Endothelial cell of umbilical vein (primary cell): ENCODE measurements at regions of chr2 and their contacts with region 1.

Region 1: DNA sequence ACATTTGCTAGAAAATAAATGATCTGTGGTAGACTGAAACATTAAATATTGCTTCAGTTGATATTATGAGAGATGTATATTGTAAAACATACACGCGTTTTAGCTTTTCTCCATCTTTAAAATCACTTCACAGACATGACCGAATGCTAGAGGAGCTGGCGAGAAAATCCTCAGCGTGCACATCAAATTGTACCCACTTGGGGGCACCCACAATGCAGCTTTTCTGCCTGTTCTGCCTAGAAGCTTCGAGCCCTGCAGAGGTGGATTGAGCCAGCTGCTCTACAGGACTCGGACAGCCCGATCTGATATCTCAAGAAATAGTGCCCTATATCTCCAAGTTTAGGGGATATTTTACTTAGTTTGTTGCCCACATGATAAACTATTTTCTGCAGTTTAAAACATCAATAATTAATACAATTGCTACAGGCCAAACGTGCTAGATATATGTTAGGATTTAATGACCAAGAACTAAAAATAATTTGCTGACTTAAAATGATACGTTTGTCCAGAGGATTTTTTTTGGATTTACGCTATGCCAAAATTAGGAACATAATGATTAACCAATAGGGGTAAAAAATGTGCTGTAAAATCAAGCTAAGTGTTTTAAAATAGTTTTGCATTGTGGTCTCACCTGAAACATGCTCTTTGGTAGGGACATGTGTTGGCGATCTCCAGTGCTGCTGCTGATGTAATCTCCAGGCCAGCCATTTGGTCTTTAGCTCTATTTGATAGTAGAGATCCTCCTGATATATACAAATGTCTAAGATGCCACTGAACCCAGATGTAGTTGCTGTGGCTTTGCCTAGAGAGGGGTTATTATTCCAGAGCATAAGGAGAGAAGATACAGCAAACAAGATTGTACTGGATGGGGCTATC is 22.3 kb upstream of the ATP5MC3 start:
- DNase-seq: peak; percentile 54
- H3K4me3 ChIP-seq: no peak overlapping the region
- H3K27ac ChIP-seq: no peak overlapping the region
- H3K4me1 ChIP-seq: no peaks in the 10 kb centered on the region
- H3K27me3 ChIP-seq: peaks cover 0 to 13% of the 10 kb centered on the region in 2 experiments
- CTCF ChIP-seq: peak; percentile 39 to 54
- POLR2A ChIP-seq: no peak

Region 2: DNA sequence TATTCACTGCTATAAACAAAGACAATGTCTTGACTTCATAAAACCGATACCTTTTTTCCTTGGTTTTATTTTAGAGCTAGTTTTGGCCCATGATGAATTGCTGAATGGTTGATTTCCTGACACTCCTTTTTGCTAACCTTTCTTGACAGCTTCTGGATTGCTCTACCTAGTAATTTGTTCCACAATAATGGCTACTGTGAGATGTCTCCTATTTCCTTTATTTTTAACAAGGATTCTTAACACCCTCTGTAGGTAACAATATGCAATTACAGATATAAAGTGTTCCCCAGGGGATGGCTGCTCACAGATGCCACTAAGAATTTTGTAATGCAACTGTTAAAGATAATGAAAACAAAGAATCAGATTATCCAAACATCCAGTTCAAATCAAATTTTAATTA is 78.4 kb after region 1 on chr2:
- CTCF ChIA-PET with region 1: interaction called, 6 read pairs
- POLR2A ChIA-PET with region 1: no interaction called
- dilution Hi-C with region 1: no loop called
- intact Hi-C with region 1: loop called (anchors 2 kb)
- DNase-seq: peak; percentile 44
- H3K4me3 ChIP-seq: no peak overlapping the region
- H3K27ac ChIP-seq: no peak overlapping the region
- H3K4me1 ChIP-seq: no peaks in the 10 kb centered on the region
- H3K27me3 ChIP-seq: peaks cover 17 to 18% of the 10 kb centered on the region in 2 experiments
- CTCF ChIP-seq: peak; percentile 20 to 26
- POLR2A ChIP-seq: no peak

Region 3: DNA sequence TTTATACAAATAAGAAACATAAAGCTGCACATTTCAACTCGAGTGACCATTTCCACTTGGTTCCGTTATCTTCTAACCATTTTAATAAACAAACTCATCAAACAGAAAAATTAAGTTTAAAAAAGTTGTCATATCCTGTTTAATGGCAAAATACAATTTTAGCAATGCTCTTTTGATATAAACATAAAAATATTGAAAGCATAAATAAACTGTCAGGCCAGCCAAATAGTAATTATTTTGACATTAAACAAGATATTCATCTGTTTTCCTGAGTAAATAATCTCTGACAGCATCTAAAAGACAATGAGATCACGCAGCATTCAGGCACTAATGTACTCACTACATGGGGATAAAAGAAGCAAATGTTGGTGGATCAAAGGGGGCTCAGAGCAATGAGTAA is 122.9 kb after region 1 on chr2:
- CTCF ChIA-PET with region 1: interaction called, 26 read pairs
- POLR2A ChIA-PET with region 1: no interaction called
- dilution Hi-C with region 1: no loop called
- intact Hi-C with region 1: loop called (anchors 1 kb)
- DNase-seq: no peak
- H3K4me3 ChIP-seq: no peak overlapping the region
- H3K27ac ChIP-seq: no peak overlapping the region
- H3K4me1 ChIP-seq: no peaks in the 10 kb centered on the region
- H3K27me3 ChIP-seq: no peaks in the 10 kb centered on the region
- CTCF ChIP-seq: no peak
- POLR2A ChIP-seq: no peak

Region 4: DNA sequence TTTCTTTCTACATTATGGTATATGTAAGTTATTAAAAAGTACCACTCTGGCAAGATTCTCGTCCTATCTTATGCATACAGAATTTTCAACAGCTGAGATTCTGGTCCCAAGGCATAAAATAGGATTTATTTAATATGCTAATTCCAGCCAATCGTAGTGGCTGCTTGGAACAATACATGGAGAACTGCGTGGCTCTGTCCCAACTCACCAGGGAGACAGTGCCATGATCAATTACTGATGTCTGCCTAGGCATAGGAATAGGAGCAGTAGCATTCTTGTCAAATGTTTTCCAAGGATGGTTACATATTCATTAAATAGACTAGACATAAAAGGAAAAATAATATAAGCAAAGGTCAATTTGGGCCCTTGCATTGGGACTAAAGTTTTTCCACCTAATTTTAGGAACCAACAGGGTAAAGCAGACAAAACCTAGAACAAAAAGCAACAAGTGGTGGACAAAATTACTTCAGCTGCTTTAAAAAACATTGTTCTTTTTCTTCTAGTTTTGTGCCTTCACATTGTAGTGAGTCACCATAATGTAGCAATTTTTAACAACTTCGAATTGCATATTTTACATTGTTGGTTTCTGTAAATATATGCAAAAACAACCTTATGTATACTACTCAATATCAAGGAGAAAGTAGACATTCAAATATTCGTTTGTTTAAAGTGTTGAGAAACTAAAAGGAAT is 210.5 kb after region 1 on chr2:
- CTCF ChIA-PET with region 1: no interaction called
- POLR2A ChIA-PET with region 1: no interaction called
- dilution Hi-C with region 1: no loop called
- intact Hi-C with region 1: no loop called
- DNase-seq: no peak
- H3K4me3 ChIP-seq: no peak overlapping the region
- H3K27ac ChIP-seq: no peak overlapping the region
- H3K4me1 ChIP-seq: no peaks in the 10 kb centered on the region
- H3K27me3 ChIP-seq: no peaks in the 10 kb centered on the region
- CTCF ChIP-seq: no peak
- POLR2A ChIP-seq: no peak

Region 5: GRCh38 chr2:175490360-175490791 is 286.5 kb after region 1 on chr2:
- CTCF ChIA-PET with region 1: no interaction called
- POLR2A ChIA-PET with region 1: no interaction called
- dilution Hi-C with region 1: no loop called
- intact Hi-C with region 1: no loop called
- DNase-seq: no peak
- H3K4me3 ChIP-seq: no peak overlapping the region
- H3K27ac ChIP-seq: no peak overlapping the region
- H3K4me1 ChIP-seq: no peaks in the 10 kb centered on the region
- H3K27me3 ChIP-seq: no peaks in the 10 kb centered on the region
- CTCF ChIP-seq: no peak
- POLR2A ChIP-seq: no peak